BJ (cell line): ENCODE measurements at regions of chr1 and their contacts with region 1.

Region 1: DNA sequence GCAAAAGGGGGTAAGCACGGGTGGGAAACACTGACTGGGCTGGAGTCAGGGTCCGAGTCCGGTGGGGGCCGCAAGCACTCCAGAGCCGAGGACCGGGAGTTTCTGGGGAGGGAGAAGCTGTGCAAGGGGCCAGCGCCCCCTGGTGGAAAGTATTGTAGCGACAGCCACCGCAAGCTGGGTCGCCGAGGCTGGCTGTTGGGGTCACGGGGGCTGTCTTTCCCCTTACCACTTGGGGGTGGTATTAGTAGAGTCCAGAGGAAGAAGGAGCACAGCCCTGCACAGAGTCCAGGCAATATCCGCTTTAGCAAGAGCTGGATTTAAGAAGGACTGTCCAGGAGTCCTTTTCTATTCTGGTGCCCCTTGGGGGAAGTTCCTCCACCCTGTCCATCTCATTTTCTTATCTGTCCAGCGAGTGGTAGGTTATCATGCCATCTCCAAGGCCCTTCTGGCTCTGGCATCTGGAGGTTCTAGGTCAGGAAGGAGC is 17.9 kb upstream of the ETV3 start:
- DNase-seq: no peak
- H3K4me3 ChIP-seq: no peak overlapping the region
- H3K27me3 ChIP-seq: peaks cover 5% of the 10 kb centered on the region
- CTCF ChIP-seq: peak; percentile 92

Region 2: DNA sequence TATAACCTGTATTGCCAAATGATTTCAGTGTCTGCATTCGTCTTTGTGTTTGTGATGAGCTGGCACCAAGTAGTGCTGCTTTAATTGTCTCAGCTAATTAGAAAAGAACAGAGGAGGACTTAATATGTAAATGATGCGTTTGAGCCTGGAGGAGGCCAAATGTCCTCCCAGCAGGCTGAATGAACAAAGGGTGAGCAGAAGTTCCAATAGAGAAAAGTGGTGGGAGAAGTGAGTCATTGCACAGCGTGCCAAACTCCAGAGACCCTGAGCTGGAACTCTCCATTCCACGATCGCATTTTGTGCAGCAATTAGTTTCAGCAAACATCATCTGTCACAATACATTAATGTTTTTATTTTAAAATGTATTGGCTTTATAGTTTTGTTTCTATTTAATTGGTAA is 74.4 kb before region 1 on chr1:
- CTCF ChIA-PET with region 1: interaction called, 243 read pairs
- POLR2A ChIA-PET with region 1: no interaction called
- DNase-seq: no peak
- H3K4me3 ChIP-seq: no peak overlapping the region
- H3K27me3 ChIP-seq: peaks cover 6% of the 10 kb centered on the region; the same call in 1 of the 2 replicates
- CTCF ChIP-seq: no peak

Region 3: GRCh38 chr1:157090196-157090647 is 65.9 kb before region 1 on chr1:
- CTCF ChIA-PET with region 1: interaction called, 243 read pairs
- POLR2A ChIA-PET with region 1: no interaction called
- DNase-seq: peak; percentile 57
- H3K4me3 ChIP-seq: no peak overlapping the region
- H3K27me3 ChIP-seq: peaks cover 1% of the 10 kb centered on the region; the same call in 1 of the 2 replicates
- CTCF ChIP-seq: peak; percentile 95

Region 4: DNA sequence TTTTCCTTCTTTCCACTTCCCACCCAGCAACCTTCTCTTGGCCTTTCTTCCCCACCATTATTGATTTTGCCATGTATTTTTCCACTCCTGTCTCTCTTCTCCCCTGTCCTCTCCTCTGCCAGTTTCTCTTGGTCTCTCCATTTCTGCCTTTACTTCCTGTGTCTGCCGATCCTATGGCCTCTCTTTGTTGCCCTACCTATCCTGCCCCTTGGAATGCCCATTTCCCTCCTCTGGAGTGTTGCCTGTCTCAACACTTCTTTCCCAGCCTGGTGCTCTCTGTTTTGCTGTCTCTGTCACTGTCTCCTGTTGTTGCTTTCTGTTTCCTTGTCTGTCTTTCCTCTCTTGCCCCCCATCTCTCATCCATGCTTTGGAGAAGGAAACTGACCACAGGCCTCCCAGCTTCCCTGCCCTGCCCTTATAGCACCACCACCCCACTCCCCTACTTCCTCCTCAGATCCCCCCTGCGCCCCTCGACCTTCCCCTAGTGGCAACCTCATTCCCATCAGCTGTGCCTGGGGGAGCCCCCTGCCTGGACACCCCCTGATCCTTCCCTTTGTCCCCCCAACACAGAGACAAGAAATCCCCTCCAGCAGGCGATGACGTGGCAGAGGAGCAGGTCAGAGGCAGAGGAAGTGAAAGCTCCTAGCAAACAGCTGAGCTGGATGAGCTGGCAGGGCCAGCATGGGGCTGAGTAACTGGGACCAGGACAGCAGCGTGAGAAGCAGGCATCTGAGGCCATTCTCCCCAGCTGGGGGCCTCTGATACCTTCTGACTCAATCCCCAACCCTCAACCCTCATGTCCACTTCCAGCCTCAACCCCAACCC is 49.9 kb before region 1 on chr1:
- CTCF ChIA-PET with region 1: interaction called, 28 read pairs
- POLR2A ChIA-PET with region 1: no interaction called
- DNase-seq: peak; percentile 25
- H3K4me3 ChIP-seq: no peak overlapping the region
- H3K27me3 ChIP-seq: no peaks in the 10 kb centered on the region; the same call in 1 of the 2 replicates
- CTCF ChIP-seq: no peak

Region 5: DNA sequence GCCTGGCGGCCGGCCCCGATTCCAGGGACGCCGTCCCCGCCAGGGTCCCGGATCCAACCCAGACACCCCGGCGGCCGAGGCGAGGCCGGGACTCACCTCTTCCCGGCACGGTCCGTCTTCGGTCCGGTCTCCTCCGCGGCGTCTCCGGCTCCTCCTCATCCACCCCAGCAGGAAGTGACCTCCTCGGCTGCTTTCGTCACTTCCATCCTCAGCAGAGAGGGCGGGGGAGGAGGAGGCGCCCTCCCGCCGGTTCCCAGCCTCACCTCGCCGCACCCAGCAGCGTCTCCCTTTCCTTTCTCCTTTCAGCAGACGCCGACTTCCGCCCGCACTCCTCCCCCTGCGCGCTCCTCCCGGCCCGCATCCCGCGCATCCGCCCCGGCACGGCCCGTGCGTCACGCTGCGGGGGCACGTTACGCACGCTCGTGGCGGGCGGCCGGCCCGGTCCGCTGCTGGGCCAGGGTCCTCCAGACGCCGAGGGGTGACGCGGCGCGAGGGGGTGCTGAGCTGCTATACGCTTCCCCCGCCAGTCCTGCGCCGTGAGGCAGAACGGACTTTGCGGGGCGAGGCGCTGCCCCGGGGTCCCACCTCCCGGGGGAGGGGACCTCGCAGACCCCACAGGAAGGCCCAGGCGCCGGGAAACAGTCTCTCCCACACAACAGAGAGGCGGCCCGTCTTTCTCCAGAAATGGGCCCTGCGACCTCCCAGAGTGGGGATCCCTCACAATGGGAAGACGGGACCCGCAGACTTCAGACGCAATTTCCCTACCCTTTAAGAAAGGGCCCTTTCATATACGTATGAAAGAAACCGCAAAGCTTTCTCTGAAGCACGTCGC is 17.7 kb before region 1 on chr1 and contains the start of gene ETV3:
- CTCF ChIA-PET with region 1: interaction called, 55 read pairs
- POLR2A ChIA-PET with region 1: interaction called, 3 read pairs
- DNase-seq: peak; percentile 67
- H3K4me3 ChIP-seq: peak within 1 kb of the TSS; percentile 96
- H3K27me3 ChIP-seq: no peaks in the 10 kb centered on the region
- CTCF ChIP-seq: no peak
- polyA plus RNA-seq, gene ETV3: 7.4 and 7.9 TPM in 2 replicates

Region 6: DNA sequence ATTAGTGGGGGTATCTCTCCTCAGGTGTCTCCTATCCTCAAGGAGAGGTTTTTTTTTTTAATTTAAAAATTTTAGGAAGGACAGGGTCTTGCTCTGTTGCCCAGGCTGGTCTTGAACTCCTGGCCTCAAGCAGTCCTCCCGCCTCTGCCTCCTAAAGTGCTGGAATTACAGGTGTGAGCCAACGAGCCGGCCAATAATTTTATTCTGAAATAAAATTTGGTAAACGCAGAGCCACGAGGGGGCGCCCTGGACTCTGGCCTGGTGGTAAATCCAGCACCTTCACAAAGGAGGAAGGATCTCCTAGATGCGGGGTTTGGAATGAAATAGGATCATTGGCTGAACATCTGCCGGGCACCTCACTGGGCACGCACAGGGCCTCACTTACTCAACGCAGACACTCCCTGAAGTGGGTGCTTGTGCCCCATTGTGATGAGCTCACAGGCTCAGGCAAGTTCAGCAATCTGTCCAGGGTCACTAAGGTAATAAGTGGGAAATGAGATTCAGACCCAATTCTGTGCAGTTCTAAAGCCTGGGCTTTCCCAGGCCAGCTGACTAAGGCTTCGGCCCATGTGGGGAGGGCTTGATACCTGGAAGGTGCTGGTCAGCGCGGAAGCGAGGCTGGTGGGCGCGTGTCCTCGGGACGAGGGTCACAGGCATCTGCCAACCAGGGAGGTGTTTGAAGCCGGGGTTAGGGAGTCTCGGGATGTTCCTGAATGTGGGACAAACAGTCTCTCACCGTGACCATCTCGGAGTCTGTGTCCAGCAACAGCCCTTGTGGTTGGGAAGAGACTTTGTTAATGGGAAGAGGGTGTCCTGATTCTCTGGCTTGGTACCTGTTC is 14.8 kb after region 1 on chr1:
- CTCF ChIA-PET with region 1: interaction called, 16 read pairs
- POLR2A ChIA-PET with region 1: no interaction called
- DNase-seq: no peak
- H3K4me3 ChIP-seq: no peak overlapping the region
- H3K27me3 ChIP-seq: peaks cover 9% of the 10 kb centered on the region
- CTCF ChIP-seq: peak; percentile 53

Region 7: DNA sequence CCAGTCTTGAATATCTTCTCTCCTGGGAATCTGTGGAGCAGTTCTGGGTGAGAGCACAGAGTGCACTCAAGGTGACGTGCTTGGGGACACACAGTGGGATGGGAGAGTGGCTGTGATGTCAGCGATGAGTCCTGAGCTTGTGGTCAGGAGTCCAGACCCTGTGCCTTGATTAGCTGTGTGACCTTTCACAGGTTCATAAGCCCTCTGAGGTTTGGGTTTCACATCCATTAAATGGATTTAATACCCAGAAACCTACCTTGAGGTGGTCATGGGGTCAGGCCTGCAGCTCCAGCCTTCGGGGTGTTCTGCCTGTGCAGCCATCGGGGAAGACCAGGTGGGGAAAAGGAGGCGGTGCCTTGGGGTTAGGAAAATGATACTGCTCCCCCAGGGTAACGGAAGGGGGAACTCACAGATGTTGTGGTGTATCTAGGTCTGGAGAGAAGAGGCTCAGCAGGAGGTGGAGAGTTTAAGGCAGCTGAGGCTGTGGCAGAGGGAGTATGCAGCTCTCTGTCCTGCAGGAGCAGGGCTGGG is 20.6 kb after region 1 on chr1:
- CTCF ChIA-PET with region 1: interaction called, 16 read pairs
- POLR2A ChIA-PET with region 1: no interaction called
- DNase-seq: no peak
- H3K4me3 ChIP-seq: no peak overlapping the region
- H3K27me3 ChIP-seq: peaks cover 8% of the 10 kb centered on the region
- CTCF ChIP-seq: no peak

Region 8: GRCh38 chr1:157978586-157979403 is 822.7 kb after region 1 on chr1:
- CTCF ChIA-PET with region 1: no interaction called
- POLR2A ChIA-PET with region 1: no interaction called
- DNase-seq: no peak
- H3K4me3 ChIP-seq: no peak overlapping the region; the same call in 1 of the 2 replicates
- H3K27me3 ChIP-seq: peaks cover 14% of the 10 kb centered on the region
- CTCF ChIP-seq: peak; percentile 19; the same call in 1 of the 2 replicates